ENCODE measurements at regions of chr12 and their contacts with region 1.

Region 1: GRCh38 chr12:6735448-6736191 is 11.8 kb downstream of the COPS7A start:
- DNase-seq: no peak
- H3K4me3 ChIP-seq: no peak overlapping the region
- H3K27ac ChIP-seq: peak overlapping the region; percentile 31 to 61 (median 54)
- H3K4me1 ChIP-seq: peaks cover 0 to 16% (median 4%) of the 10 kb centered on the region in 3 donors
- H3K27me3 ChIP-seq: no peaks in the 10 kb centered on the region
- CTCF ChIP-seq: peak; percentile 49 to 85 (median 78)
- POLR2A ChIP-seq: no peak

Region 2: GRCh38 chr12:6766651-6767349 is 31.2 kb after region 1 on chr12:
- intact Hi-C with region 1: no loop called
- DNase-seq: no peak
- H3K4me3 ChIP-seq: peak overlapping the region; percentile 73 to 85 (median 84)
- H3K27ac ChIP-seq: peak overlapping the region; percentile 95 to 99 (median 98)
- H3K4me1 ChIP-seq: peaks cover 49 to 83% (median 50%) of the 10 kb centered on the region in 3 donors
- H3K27me3 ChIP-seq: no peaks in the 10 kb centered on the region
- CTCF ChIP-seq: peak; percentile 49 to 86 (median 78)
- POLR2A ChIP-seq: peak in 1 of 4 donors; percentile 15

Region 3: DNA sequence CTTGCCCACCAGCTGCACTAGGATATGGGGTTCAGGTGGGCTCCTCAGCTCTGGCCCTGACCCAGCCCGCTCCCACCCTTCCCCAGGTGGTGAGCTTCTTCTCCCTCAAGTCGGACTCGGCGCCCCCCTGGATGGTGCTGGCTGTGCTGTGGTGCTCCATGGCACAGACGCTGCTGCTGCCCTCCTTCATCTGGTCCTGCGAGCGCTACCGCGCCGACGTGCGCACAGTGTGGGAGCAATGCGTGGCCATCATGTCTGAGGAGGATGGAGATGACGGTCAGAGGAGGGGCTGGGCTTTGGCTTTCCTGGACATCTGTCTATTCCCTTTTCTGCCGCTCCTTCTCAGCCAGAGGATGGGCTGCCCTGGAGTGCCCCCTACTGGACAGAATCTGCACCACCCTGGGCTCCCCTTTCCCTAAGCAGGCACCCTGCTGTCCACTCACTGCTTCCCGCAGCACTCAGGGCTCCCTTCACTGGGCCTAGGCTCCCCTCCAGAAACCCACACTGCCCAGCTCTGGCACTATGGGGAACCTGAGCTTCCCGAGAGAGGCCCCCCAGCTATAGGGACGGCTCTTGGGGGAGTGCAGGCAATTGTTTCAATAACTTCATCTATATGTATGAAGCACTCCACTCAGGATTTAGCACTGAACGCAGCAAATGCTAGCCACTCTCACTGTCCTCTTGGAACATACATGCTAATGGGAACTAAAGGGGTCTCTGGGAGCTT is 89.9 kb after region 1 on chr12:
- intact Hi-C with region 1: loop called (anchors 5 kb)
- DNase-seq: no peak
- H3K4me3 ChIP-seq: peak overlapping the region in 1 of 4 donors; percentile 24
- H3K27ac ChIP-seq: no peak overlapping the region
- H3K4me1 ChIP-seq: peaks cover 10 to 69% (median 18%) of the 10 kb centered on the region in 3 donors
- H3K27me3 ChIP-seq: peaks cover 0 to 97% (median 5%) of the 10 kb centered on the region in 4 donors
- CTCF ChIP-seq: peak; percentile 85 to 94 (median 90)
- POLR2A ChIP-seq: no peak

Measured in esophagus squamous epithelium (tissue), 5 donors.